Activated CD8-positive, alpha-beta T cell treated with anti-CD3 and anti-CD28 coated beads, Interleukin-2, amount 10 ng/mL, durations not matched to agents 7 days and 5 days (primary cell): ENCODE measurements at regions of chr6 and their contacts with region 1.

Region 1: GRCh38 chr6:85354761-85355618 is 94.9 kb upstream of the NT5E start:
- DNase-seq: peak; percentile 77
- ATAC-seq: peak; percentile 87
- H3K4me3 Mint-ChIP-seq: no peak overlapping the region
- H3K27ac Mint-ChIP-seq: no peak overlapping the region
- H3K4me1 Mint-ChIP-seq: no peaks in the 10 kb centered on the region
- H3K27me3 Mint-ChIP-seq: peaks cover 4% of the 10 kb centered on the region

Region 2: GRCh38 chr6:85372188-85372914 is 17.4 kb after region 1 on chr6:
- CTCF ChIA-PET with region 1: no interaction called
- POLR2A ChIA-PET with region 1: no interaction called
- DNase-seq: no peak
- ATAC-seq: no peak
- H3K4me3 Mint-ChIP-seq: no peak overlapping the region
- H3K27ac Mint-ChIP-seq: no peak overlapping the region
- H3K4me1 Mint-ChIP-seq: peaks cover 12% of the 10 kb centered on the region
- H3K27me3 Mint-ChIP-seq: no peaks in the 10 kb centered on the region

Region 3: GRCh38 chr6:85460921-85461797 is 106.2 kb after region 1 on chr6:
- CTCF ChIA-PET with region 1: interaction called, 19 read pairs
- POLR2A ChIA-PET with region 1: no interaction called
- DNase-seq: peak; percentile 83
- ATAC-seq: peak; percentile 73
- H3K4me3 Mint-ChIP-seq: peak overlapping the region; percentile 49
- H3K27ac Mint-ChIP-seq: peak overlapping the region; percentile 85
- H3K4me1 Mint-ChIP-seq: peaks cover 96% of the 10 kb centered on the region
- H3K27me3 Mint-ChIP-seq: no peaks in the 10 kb centered on the region

Region 4: GRCh38 chr6:85476532-85476931 is 121.5 kb after region 1 on chr6:
- CTCF ChIA-PET with region 1: interaction called, 120 read pairs
- POLR2A ChIA-PET with region 1: no interaction called
- DNase-seq: no peak
- ATAC-seq: no peak
- H3K4me3 Mint-ChIP-seq: no peak overlapping the region
- H3K27ac Mint-ChIP-seq: no peak overlapping the region
- H3K4me1 Mint-ChIP-seq: peaks cover 10% of the 10 kb centered on the region
- H3K27me3 Mint-ChIP-seq: no peaks in the 10 kb centered on the region

Region 5: DNA sequence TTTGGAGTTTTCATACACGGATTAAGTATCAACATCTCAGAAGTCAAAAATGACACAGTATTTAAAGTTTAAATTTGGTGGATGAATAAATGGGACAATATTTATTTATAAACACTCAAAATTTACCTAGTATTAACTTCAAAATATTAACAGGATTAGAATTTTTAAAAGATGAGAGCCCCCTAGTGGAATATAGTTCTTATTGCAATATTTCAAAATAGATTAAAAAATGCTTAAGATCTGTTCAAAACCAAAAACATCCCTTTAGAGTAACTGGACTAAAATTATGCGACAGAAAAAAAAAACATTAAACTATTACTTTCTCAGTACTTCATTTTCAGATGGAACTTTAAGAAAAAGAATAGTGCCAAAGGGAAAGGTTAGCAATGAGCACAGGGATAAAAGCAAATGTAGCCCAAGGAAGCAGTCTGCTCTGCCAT is 182.1 kb after region 1 on chr6:
- CTCF ChIA-PET with region 1: interaction called, 21 read pairs
- POLR2A ChIA-PET with region 1: no interaction called
- DNase-seq: no peak
- ATAC-seq: no peak
- H3K4me3 Mint-ChIP-seq: no peak overlapping the region
- H3K27ac Mint-ChIP-seq: peak overlapping the region; percentile 24
- H3K4me1 Mint-ChIP-seq: no peaks in the 10 kb centered on the region
- H3K27me3 Mint-ChIP-seq: no peaks in the 10 kb centered on the region

Region 6: DNA sequence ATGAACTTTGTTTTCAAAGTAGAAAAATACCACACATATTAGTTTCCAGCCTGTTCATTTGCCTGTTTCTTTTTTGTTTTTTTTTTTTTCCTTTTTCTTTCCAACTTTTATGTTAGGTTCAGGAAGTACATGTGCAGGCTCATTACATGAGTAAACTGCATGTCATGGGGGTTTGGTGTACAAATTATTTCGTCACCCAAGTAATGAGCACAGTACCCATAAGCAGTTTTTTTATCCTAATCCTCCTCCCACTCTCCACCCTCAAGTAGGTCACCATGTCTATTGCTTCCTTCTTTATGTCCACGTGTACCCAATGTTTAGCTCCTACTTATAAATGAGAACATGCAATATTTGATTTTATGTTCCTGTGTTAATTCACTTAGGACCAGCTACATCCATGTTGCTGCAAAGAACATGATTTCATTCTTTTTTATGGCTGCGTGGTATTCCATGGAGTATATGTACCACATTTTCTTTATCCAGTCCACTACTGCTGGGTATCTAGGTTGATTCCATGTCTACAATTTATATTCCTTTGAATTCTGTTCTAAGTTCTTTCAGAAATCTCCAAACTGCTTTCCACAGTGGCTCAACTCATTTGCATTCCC is 206.9 kb after region 1 on chr6:
- CTCF ChIA-PET with region 1: no interaction called
- POLR2A ChIA-PET with region 1: no interaction called
- DNase-seq: no peak
- ATAC-seq: no peak
- H3K4me3 Mint-ChIP-seq: no peak overlapping the region
- H3K27ac Mint-ChIP-seq: no peak overlapping the region
- H3K4me1 Mint-ChIP-seq: peaks cover 4% of the 10 kb centered on the region
- H3K27me3 Mint-ChIP-seq: no peaks in the 10 kb centered on the region